Dorsolateral prefrontal cortex (tissue), 120 donors: ENCODE measurements at regions of chr12 and their contacts with region 1.

Region 1: DNA sequence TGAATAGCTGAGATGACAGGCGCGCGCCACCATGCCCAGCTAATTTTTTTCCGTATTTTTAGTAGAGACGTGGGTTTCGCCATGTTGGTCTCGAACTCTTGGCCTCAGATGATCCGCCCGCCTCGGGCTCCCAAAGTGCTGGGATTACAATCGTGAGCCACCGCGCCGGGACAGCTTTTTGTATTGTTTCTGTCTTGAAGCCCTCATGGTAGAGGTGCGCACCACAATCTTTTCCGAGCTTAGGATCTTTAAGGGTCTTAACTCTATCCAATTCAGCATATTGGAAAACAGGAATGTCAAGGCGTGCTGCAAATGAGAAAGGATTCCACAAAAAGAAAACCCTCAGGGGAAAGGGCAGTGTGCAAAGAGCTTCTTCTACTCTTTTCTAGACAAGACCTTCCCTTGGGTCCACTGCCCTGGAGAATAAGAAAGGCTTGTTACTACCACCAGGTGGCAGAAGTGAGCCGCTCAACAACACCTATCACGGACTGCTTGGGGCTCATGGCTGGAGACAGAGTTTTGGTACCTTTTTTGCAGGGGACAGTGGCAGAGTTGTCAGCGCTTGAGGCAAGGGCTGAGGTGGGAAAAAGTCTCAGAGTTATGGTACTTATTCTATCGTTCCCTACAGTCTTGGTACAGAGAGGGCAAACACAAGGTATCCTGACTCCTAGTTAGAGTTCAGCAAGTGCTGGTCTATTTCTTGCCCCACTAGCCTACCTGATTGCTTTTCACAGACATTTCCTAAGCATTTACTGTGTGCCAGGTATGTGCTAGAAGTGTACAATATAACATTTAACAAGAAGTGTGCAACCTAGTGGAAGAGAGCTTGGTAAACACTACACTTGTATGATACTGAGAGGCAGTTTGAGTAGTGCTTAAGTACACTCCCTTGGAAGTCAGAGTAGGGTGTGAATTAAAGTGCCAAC is 16.4 kb upstream of the SP7 start:
- DNase-seq: peak; percentile 58 to 88 (median 82)
- H3K4me3 ChIP-seq: no peak overlapping the region
- H3K27ac ChIP-seq: peak overlapping the region in 2 of 59 donors; percentile 45 to 64
- H3K27me3 ChIP-seq: no peaks in the 10 kb centered on the region
- CTCF ChIP-seq: peak; percentile 78 to 98 (median 94)

Region 2: DNA sequence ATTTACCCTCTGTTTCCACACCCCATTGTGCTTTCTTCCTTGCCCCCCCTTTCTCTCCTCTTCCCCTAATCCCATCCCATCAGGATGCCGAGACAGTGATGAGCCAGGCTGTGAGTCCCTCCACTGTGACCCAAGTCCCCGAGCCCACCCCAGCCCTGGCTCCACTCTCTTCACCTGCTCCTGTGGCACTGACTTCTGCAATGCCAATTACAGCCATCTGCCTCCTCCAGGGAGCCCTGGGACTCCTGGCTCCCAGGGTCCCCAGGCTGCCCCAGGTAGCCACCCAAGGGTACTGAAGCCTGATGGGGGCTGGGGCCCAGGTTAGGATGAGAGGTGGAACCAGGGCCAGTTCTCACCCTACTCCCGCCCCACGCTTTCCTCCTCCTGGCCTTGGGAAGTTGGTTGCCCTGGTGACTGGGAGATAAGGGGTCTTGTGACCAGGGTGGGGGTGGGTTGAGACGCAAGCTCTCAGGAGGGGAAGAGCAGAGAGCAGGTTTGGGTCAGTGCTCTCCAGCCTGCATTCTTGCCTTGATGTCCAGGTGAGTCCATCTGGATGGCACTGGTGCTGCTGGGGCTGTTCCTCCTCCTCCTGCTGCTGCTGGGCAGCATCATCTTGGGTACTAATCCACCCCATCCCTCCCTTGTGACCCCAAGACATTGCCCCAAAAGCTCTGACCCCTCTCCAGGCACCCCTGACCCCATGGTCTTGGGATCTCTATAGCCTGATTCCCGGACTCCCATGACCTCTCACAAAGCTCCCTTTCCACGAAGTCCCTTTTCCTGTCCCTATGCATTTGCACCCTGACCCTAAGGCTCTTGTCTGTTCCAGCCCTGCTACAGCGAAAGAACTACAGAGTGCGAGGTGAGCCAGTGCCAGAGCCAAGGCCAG is 72.3 kb after region 1 on chr12:
- intact Hi-C with region 1: loop called (anchors 1 kb)
- DNase-seq: no peak
- H3K4me3 ChIP-seq: no peak overlapping the region
- H3K27ac ChIP-seq: no peak overlapping the region
- H3K27me3 ChIP-seq: no peaks in the 10 kb centered on the region
- CTCF ChIP-seq: no peak

Region 3: DNA sequence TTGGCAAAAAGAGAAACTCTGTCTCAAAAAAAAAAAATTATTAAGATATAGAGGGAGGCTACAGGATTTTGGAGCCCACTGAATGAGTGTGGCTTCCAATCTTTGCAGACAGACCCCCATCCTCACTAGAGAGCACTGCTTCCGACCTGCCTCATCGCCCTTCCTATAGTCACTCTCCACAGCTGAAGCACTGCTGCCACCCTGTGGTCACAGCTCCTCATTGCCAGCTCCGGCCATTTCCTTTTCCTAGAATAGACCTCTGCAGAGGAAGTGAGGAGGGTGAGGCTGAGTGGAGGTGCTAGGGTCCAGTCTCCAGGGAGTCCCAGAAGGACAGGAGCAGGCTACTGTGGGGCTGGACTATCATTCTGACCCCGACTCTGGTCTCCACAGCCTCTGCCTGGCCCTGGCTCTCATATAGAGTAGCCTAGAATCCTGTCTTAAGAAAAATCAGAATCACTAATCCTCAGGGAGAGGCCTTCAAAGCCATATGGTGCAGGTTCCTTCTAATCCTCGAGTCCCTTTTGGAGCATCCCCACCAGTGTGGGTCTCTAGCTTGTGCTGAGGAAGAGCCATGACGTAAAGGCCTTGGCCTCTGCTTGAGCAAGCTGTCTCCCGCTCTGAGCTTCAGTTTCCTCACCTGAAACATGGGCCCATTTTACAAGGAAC is 156.1 kb after region 1 on chr12:
- intact Hi-C with region 1: loop called (anchors 2 to 10 kb)
- DNase-seq: peak; percentile 72 to 91 (median 88)
- H3K4me3 ChIP-seq: peak overlapping the region in 2 of 59 donors; percentile 7 to 20
- H3K27ac ChIP-seq: peak overlapping the region in 50 of 59 donors; percentile 5 to 100 (median 65)
- H3K27me3 ChIP-seq: no peaks in the 10 kb centered on the region
- CTCF ChIP-seq: peak; percentile 71 to 94 (median 89)